ENCODE measurements at regions of chr4 and their contacts with region 1.

Region 1: GRCh38 chr4:147498031-147498660 is 17.2 kb downstream of the EDNRA start:
- DNase-seq: no peak
- H3K4me3 ChIP-seq: no peak overlapping the region
- H3K27me3 ChIP-seq: no peaks in the 10 kb centered on the region
- CTCF ChIP-seq: no peak

Region 2: GRCh38 chr4:147440442-147440841 is 57.7 kb before region 1 on chr4:
- CTCF ChIA-PET with region 1: no interaction called
- POLR2A ChIA-PET with region 1: no interaction called
- DNase-seq: no peak
- H3K4me3 ChIP-seq: no peak overlapping the region
- H3K27me3 ChIP-seq: no peaks in the 10 kb centered on the region
- CTCF ChIP-seq: no peak

Region 3: DNA sequence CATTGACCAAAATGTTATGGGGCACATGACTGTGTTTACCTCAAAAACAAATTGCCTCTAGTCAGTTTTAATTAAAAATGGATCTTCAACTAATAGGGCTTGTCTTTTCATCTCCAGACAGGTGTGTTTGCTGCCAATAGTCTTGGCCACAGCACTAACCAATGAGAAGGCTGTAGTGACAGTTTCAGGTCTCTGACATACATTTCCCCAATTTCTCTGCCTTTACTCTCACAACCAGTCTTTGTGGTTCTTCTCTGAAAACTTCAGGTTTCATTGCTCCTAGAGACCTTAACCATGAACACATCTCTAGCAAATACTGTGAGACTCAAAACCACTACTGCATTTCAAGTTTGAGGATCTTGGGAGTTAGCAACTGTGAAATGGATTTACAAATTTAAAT is 20.7 kb before region 1 on chr4:
- CTCF ChIA-PET with region 1: no interaction called
- POLR2A ChIA-PET with region 1: no interaction called
- DNase-seq: no peak
- H3K4me3 ChIP-seq: no peak overlapping the region
- H3K27me3 ChIP-seq: no peaks in the 10 kb centered on the region
- CTCF ChIP-seq: no peak

Region 4: DNA sequence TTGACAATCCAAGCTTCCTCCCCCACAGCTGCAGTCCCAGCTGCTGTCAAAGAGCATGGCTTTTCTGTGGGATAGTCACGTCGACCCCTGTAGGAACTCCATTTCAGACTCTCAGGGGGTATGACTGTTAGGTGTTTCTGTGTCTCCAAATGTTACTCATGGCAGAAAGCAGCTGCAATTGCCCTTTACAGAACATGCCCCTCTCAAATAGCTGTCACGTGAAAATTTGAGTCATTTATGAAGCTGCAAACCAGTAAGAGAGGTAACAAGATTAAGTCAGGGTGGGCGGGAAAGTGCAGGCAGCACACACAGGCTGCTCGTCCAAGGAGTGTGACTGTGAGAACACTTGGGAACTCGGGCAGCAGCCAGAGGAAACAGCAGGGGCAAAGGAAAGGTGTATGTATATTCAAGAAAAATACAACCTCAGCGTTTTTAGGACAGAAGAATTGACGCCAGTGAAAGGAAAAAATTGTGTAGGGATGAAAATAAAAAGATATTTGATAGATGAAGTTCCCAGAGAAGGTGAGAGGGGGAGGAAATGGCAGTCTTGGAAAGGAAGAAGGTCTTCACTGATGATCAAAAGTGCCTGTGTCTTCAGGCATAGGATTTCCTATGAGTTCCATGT is 52.6 kb after region 1 on chr4:
- CTCF ChIA-PET with region 1: no interaction called
- POLR2A ChIA-PET with region 1: interaction called, 16 read pairs
- DNase-seq: peak; percentile 41
- H3K4me3 ChIP-seq: no peak overlapping the region; the same call in 1 of the 2 replicates
- H3K27me3 ChIP-seq: no peaks in the 10 kb centered on the region
- CTCF ChIP-seq: no peak

Region 5: DNA sequence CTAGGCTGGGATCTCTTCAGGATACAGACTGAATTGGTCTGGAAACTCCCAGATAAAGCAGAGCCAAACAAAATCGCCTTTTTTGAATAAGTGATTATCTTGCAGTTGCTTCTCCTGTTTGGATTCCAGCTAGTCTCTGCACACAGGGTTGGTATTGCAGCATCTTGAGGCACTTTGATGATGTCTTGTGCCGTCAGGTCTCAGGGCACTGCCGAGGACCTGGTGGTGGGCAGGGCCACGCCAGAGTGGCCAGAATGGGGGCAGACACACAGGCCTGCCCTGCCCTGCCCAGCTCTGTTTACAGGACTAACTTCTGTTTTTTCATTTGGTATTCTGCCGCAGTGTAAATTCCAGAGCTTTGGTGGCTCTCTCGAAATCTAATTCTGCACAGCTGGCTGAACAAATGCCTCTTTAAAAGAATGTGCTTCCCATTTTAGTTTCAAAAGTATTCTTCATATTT is 668.0 kb after region 1 on chr4:
- CTCF ChIA-PET with region 1: no interaction called
- POLR2A ChIA-PET with region 1: no interaction called
- DNase-seq: peak; percentile 3
- H3K4me3 ChIP-seq: no peak overlapping the region
- H3K27me3 ChIP-seq: no peaks in the 10 kb centered on the region
- CTCF ChIP-seq: no peak